Left lung (tissue), 14 donors: ENCODE measurements at regions of chr6 and their contacts with region 1.

Region 1: GRCh38 chr6:137707590-137708360 is 159.3 kb upstream of the TNFAIP3 start:
- DNase-seq: peak in 3 of 4 donors; percentile 55 to 78 (median 71)
- ATAC-seq: peak; percentile 89
- H3K4me3 ChIP-seq: no peak overlapping the region
- H3K27ac ChIP-seq: peak overlapping the region in 1 of 2 donors; percentile 78
- H3K4me1 ChIP-seq: peaks cover 4 to 53% of the 10 kb centered on the region in 2 donors
- H3K27me3 ChIP-seq: no peaks in the 10 kb centered on the region
- CTCF ChIP-seq: peak; percentile 57 to 63

Region 2: GRCh38 chr6:137866914-137867684 is 159.3 kb after region 1 on chr6 and contains the start of gene TNFAIP3:
- intact Hi-C with region 1: loop called in 1 of 2 experiments (anchors 10 kb)
- DNase-seq: peak; percentile 94 to 97 (median 95)
- ATAC-seq: peak; percentile 93
- H3K4me3 ChIP-seq: peak within 1 kb of the TSS; percentile 79 to 86
- H3K27ac ChIP-seq: peak within 1 kb of the TSS; percentile 96
- H3K4me1 ChIP-seq: peaks cover 6 to 71% of the 10 kb centered on the region in 2 donors
- H3K27me3 ChIP-seq: no peaks in the 10 kb centered on the region
- CTCF ChIP-seq: peak; percentile 80 to 90
- polyA plus RNA-seq, gene TNFAIP3: 14.6 to 19.2 (median 15.4) TPM

Region 3: GRCh38 chr6:137944793-137945498 is 237.2 kb after region 1 on chr6:
- intact Hi-C with region 1: loop called in 1 of 2 experiments (anchors 10 kb)
- DNase-seq: peak in 2 of 4 donors; percentile 26 to 58
- ATAC-seq: peak; percentile 91
- H3K4me3 ChIP-seq: no peak overlapping the region
- H3K27ac ChIP-seq: no peak overlapping the region
- H3K4me1 ChIP-seq: peaks cover 0 to 8% of the 10 kb centered on the region in 2 donors
- H3K27me3 ChIP-seq: no peaks in the 10 kb centered on the region
- CTCF ChIP-seq: peak; percentile 74 to 75

Region 4: DNA sequence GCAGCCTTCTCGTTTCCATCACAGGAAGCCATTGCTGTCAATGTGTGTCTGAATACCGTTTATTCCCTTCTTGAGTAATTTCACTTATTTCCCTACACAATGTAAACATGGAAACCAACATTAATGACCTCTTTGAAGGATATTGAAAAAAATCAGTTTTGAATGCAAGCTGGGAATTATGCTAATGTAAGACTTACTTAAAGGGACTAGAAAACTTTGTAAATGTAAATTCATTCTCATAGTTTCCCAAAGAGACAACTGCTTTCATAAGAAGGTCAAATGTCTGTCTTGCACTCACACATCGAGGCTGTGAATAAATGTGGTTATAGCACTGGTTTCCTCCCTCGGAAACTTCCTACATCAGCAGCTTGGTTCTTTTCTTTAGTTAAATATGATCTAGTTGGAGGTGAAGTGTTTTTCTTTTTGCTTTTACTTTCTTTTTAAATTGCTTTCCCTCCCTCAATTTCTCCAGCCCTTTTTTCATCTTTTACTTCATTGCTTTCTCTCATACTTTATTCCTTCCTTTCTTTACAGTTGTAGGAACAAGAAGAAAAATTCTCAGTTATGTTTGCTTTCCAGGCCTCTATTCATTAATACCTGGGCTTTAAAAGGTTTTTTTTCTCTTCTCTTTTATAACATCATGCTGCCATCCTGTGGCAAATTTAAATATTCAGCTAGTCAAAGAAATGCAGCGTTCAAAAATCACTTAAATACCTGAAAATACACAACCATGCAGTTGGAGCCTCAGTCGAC is 267.6 kb after region 1 on chr6:
- intact Hi-C with region 1: loop called in 1 of 2 experiments (anchors 10 kb)
- DNase-seq: peak in 1 of 4 donors; percentile 10
- ATAC-seq: peak; percentile 32
- H3K4me3 ChIP-seq: no peak overlapping the region
- H3K27ac ChIP-seq: peak overlapping the region in 1 of 2 donors; percentile 57
- H3K4me1 ChIP-seq: peaks cover 0 to 17% of the 10 kb centered on the region in 2 donors
- H3K27me3 ChIP-seq: no peaks in the 10 kb centered on the region
- CTCF ChIP-seq: peak in 1 of 2 donors; percentile 14